ENCODE measurements at regions of chr14 and their contacts with region 1.

Region 1: DNA sequence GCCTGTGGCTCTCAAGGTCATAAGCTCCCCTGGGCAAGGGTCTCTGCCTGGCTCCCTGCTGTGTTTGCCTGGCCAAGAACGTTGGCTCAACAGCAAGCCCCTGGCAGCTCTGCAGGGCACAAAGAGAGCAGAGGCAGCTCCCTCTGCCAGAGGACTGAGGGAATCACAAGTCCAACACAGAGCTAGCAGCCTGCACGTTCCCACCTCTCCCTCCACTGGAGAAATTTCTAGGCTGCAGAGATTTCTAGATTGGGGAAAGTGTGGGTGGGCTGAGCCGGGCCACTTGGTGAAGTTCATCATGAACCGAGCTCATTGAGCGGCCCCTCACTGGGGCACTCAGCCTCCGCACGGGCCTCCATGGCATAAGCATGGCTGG is 19.8 kb downstream of the ZFYVE21 start:
- DNase-seq: peak in 1 of 2 donors; percentile 59
- H3K4me3 ChIP-seq: no peak overlapping the region
- H3K27ac ChIP-seq: peak overlapping the region; percentile 83 to 92
- H3K4me1 ChIP-seq: peaks cover 20 to 34% of the 10 kb centered on the region in 2 donors
- H3K27me3 ChIP-seq: no peaks in the 10 kb centered on the region
- CTCF ChIP-seq: peak in 1 of 3 experiments; percentile 51

Region 2: DNA sequence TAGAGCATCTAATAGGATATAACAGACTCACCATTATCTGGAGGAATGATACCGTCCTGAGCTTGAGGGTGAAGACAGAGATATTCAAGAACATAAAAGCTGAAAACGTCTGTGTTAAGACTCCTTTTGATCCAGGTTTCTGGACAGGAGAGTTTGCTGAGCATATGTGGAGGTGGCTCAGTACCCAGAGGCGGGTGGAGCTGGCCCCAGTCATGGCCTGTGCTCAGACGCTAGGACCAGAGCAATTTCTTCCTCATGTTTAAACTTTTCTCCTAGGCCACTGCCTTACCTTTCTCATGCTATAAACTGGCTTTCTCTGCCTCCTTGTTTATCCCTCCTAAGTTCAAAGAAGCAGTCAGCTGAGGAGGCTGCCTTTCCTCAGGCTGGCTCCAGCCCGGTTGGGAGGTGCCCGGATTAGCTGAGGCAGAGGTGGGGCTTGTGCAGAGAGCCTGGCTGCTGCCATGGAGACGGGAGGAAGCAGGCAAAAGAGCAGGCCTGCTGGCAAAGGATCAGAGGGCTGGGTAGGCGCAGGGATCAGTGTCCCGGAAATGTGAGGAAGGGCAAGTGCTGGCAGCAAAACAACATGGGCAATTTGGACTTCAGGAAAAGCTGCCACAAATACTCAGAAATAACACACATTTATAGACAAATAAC is 158.9 kb before region 1 on chr14:
- intact Hi-C with region 1: loop called (anchors 5 kb)
- DNase-seq: peak; percentile 65 to 94
- H3K4me3 ChIP-seq: no peak overlapping the region
- H3K27ac ChIP-seq: peak overlapping the region; percentile 69 to 73
- H3K4me1 ChIP-seq: peaks cover 0 to 14% of the 10 kb centered on the region in 2 donors
- H3K27me3 ChIP-seq: no peaks in the 10 kb centered on the region
- CTCF ChIP-seq: no peak